Breast epithelium (tissue), 4 donors: ENCODE measurements at regions of chr2 and their contacts with region 1.

Region 1: DNA sequence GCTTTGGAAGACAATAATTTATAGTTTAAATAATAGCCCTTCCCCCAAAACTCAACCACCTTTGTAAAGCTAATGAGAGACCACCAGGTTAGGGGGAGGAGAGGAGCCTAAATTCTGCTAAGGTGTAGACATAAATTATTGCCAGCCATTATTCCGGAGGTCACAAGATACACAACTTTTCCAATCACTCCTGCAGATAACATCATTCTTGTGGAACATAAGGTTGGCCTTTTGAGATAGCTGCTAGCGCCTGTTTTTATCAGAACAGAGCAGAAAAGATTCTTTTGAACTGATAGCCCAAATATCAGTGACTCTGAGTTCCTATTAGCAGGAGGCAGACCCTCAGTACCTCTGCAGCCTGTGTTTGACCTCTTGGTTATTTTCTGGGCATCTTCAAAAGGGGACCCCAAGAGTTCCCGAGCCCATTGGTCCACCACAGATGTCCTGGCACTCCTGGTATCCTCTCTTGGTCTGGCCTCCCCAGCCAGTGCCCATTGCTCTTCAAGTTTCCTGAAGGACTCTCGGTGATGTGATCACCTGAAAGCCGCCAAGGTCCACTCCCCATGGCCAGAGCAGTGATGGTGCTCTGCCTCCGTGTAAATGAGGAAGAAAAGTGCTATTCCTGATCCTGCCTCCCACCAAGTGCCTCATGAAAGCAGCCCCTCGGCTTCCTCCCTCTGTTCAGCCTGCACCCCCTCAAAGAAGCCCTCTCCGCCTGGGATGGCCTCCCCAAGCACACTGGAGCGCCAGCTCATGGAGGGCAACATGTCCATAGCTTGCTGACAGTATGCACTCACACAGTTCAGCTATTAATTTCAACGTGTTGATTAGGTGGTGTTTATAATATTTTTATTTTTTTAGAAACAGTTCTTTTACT is 38.5 kb upstream of the LAPTM4A start:
- DNase-seq: no peak
- H3K4me3 ChIP-seq: no peak overlapping the region
- H3K27ac ChIP-seq: no peak overlapping the region
- H3K4me1 ChIP-seq: no peaks in the 10 kb centered on the region
- H3K27me3 ChIP-seq: no peaks in the 10 kb centered on the region
- CTCF ChIP-seq: no peak
- POLR2A ChIP-seq: no peak

Region 2: DNA sequence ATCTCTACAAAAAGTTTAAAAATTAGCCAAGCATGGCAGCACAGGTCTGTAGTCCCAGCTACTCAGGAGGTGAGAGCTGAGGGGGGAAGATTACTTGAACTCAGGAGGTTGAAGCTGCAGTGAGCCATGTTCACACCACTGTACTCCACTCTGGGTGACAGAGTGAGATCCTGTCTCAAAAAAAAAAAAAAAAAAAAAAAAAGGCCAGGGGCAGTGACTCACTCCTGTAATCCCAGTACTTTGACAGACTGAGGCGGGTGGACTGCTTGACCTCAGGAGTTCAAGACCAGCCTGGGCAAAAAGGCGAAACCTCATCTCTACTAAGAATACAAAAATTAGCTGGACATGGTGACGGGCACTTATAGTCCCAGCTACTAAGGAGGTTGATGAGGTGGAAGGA is 223.7 kb after region 1 on chr2:
- intact Hi-C with region 1: no loop called
- DNase-seq: no peak
- H3K4me3 ChIP-seq: no peak overlapping the region
- H3K27ac ChIP-seq: no peak overlapping the region
- H3K4me1 ChIP-seq: no peaks in the 10 kb centered on the region
- H3K27me3 ChIP-seq: no peaks in the 10 kb centered on the region
- CTCF ChIP-seq: no peak
- POLR2A ChIP-seq: no peak

Region 3: DNA sequence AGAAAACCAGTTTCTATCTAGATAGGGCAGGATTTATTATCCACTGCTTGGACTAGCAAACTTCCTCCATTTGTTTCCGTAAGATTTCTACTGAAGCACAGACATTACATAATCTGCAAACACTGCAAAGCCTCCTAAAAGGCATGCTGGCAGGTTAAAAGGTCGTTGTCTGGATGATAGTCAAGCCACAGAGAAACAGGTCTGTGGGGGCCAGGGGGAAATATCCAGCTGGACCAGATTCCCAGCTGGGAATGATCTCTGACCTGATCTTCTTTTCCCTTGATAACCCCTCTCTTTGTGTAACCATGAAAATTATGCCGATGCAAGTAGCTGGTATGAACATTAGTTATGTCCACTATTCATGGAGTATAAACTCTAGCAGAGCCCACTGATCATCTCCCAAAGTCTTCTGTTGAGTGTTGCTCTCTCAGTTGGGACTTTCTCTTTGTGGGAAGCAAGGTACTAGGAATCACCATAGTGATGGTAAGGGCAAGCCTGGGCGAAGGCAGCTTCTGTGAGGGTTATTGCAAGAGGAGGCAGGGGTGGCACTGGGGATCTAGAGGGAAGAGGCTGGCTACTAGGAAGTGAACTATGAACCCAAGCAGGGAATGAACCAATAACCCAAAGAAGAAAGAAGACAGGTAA is 638.3 kb after region 1 on chr2:
- intact Hi-C with region 1: loop called (anchors 5 kb)
- DNase-seq: no peak
- H3K4me3 ChIP-seq: no peak overlapping the region
- H3K27ac ChIP-seq: no peak overlapping the region
- H3K4me1 ChIP-seq: no peaks in the 10 kb centered on the region
- H3K27me3 ChIP-seq: no peaks in the 10 kb centered on the region
- CTCF ChIP-seq: no peak
- POLR2A ChIP-seq: no peak